ENCODE measurements at regions of chr16 and their contacts with region 1.

Region 1: GRCh38 chr16:88569985-88570690 is at the start of gene ZC3H18:
- DNase-seq: peak; percentile 93 to 96
- H3K4me3 ChIP-seq: peak within 1 kb of the TSS; percentile 83
- H3K4me1 ChIP-seq: peaks cover 9% of the 10 kb centered on the region
- H3K27me3 ChIP-seq: no peaks in the 10 kb centered on the region

Region 2: DNA sequence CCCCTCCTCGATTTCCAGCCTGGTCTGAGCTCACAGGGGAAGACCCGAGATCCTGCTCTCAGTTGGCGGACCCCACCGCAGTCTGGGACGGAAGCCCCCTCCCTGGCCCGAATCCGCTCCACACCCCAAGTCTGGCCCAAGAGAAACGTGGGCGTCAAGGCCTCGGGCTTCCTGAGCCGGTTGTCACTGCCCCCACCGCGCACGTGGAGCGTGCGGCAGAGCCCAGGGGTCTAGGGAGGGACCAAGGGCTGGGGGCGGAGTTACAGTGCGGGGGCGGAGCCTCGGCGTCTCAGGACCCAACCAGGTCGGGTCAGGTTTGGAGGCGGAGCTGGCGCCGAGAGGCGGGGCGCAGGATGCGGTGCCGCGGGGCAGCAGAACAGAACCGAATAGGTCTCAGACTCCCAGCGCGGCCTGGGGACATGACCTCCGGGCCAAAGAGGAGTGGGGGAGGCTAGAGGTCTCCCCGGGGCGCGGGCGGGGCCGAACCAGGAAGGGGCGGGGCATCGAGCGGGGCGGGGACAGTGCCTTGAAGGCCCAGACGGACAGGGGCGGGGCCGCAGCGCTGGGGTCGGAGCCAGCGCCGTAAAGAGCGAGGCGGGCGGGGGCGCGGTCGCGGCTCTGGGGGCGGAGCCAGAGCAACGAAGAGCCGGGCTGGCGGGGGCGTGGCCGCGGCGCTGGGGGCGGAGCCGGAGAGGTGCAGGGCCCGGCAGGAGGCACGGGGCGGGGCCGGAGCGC is 117.5 kb before region 1 on chr16:
- in situ Hi-C with region 1: loop called (anchors 10 kb)
- DNase-seq: peak; percentile 87 to 99
- H3K4me3 ChIP-seq: peak overlapping the region; percentile 59
- H3K4me1 ChIP-seq: peaks cover 13% of the 10 kb centered on the region
- H3K27me3 ChIP-seq: peaks cover 17% of the 10 kb centered on the region